ENCODE measurements at regions of chr15 and their contacts with region 1.

Region 1: DNA sequence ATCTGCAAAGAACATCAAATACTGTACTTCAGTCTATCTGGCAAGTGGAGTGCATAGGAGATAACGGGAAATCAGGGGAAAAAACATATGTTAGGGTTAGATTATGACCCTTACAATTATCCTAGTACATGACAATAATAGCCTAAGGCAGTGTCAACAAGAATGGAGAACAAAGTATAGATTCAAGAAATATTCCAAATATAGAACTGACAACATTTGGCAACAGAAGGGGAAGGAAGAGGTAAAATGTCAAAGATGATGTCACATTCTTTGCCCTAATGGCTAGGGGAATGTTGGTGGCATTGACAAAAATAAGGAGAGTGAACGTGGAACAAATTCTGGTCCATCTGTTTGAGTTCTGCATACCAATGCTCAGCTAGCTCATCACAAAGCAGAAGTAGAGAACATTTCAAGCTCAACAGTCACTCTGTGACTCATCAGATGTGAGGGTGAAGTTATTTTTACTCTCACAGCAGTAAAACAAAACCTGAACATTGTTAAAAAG is 15.5 kb upstream of the ATP8B4 start:
- DNase-seq: no peak
- ATAC-seq: peak; percentile 47
- H3K4me3 Mint-ChIP-seq: peak overlapping the region; percentile 24
- H3K27ac Mint-ChIP-seq: peak overlapping the region; percentile 96
- H3K4me1 Mint-ChIP-seq: peaks cover 53% of the 10 kb centered on the region
- H3K27me3 Mint-ChIP-seq: no peaks in the 10 kb centered on the region

Region 2: GRCh38 chr15:48946088-48946839 is 1188.3 kb before region 1 on chr15:
- CTCF ChIA-PET with region 1: no interaction called
- POLR2A ChIA-PET with region 1: no interaction called
- intact Hi-C with region 1: loop called (anchors 5 to 10 kb)
- DNase-seq: no peak
- ATAC-seq: peak; percentile 93
- H3K4me3 Mint-ChIP-seq: no peak overlapping the region
- H3K27ac Mint-ChIP-seq: peak overlapping the region; percentile 7
- H3K4me1 Mint-ChIP-seq: peaks cover 13% of the 10 kb centered on the region
- H3K27me3 Mint-ChIP-seq: peaks cover 20% of the 10 kb centered on the region

Region 3: DNA sequence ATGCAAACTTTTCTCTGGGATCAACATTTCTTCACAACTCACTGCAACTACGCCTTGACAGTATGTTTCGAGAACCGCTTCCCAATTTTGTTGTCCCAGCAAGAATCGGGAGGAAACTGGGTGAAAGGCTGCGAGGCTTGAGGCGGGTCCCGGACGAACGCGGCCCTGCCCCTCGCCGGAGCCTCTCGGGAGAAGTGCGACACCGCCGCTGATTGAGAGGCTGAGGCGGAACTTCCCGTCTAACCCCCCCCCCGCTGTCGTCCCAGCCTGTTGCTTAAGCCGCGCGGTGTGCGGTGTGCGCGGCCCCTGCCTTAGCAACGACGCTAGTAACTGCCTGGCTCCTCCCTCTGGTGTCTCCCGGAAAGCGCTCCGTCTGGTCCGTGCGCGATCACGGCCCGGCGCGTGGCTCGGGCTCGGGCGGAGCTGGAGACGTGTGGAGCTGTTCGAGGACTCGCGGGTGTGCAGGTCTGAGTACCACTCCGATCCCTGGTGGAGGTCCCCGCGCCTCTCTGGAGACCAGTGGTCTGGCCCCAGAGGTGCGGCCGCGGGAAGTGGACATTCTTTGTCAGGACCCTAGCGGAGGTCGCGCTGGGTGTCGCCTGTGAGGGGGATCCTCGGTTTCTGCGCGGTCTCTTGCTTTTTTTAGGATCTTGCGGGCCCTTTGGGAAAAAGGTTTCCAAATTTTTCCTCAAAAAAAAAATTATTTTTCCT is 513.8 kb before region 1 on chr15 and contains the starts of genes DTWD1 and FAM227B:
- CTCF ChIA-PET with region 1: no interaction called
- POLR2A ChIA-PET with region 1: no interaction called
- intact Hi-C with region 1: loop called (anchors 2 kb)
- DNase-seq: peak; percentile 96
- ATAC-seq: peak; percentile 98
- H3K4me3 Mint-ChIP-seq: peak within 1 kb of the TSS; percentile 86
- H3K27ac Mint-ChIP-seq: peak within 1 kb of the TSS; percentile 88
- H3K4me1 Mint-ChIP-seq: peaks cover 36% of the 10 kb centered on the region
- H3K27me3 Mint-ChIP-seq: no peaks in the 10 kb centered on the region
- total RNA-seq, gene DTWD1: 20.4 to 22.4 TPM
- total RNA-seq, gene FAM227B: 2.7 to 4.4 TPM

Region 4: GRCh38 chr15:50182219-50183013 is 47.8 kb after region 1 on chr15:
- CTCF ChIA-PET with region 1: no interaction called
- POLR2A ChIA-PET with region 1: interaction called, 4 read pairs
- intact Hi-C with region 1: loop called (anchors 2 to 5 kb)
- DNase-seq: peak; percentile 73
- ATAC-seq: peak; percentile 68
- H3K4me3 Mint-ChIP-seq: peak overlapping the region; percentile 85
- H3K27ac Mint-ChIP-seq: peak overlapping the region; percentile 88
- H3K4me1 Mint-ChIP-seq: peaks cover 21% of the 10 kb centered on the region
- H3K27me3 Mint-ChIP-seq: peaks cover 27% of the 10 kb centered on the region

Region 5: GRCh38 chr15:50377867-50378751 is 243.5 kb after region 1 on chr15:
- CTCF ChIA-PET with region 1: no interaction called
- POLR2A ChIA-PET with region 1: no interaction called
- intact Hi-C with region 1: loop called (anchors 1 kb)
- DNase-seq: no peak
- ATAC-seq: peak; percentile 96
- H3K4me3 Mint-ChIP-seq: no peak overlapping the region
- H3K27ac Mint-ChIP-seq: peak overlapping the region; percentile 77
- H3K4me1 Mint-ChIP-seq: peaks cover 19% of the 10 kb centered on the region
- H3K27me3 Mint-ChIP-seq: no peaks in the 10 kb centered on the region

Region 6: GRCh38 chr15:50908210-50909009 is 773.8 kb after region 1 on chr15 and contains the start of gene AP4E1:
- CTCF ChIA-PET with region 1: no interaction called
- POLR2A ChIA-PET with region 1: no interaction called
- intact Hi-C with region 1: loop called in 1 of 2 experiments (anchors 1 kb)
- DNase-seq: peak; percentile 96
- ATAC-seq: peak; percentile 62
- H3K4me3 Mint-ChIP-seq: peak within 1 kb of the TSS; percentile 87
- H3K27ac Mint-ChIP-seq: peak within 1 kb of the TSS; percentile 97
- H3K4me1 Mint-ChIP-seq: peaks cover 24% of the 10 kb centered on the region
- H3K27me3 Mint-ChIP-seq: no peaks in the 10 kb centered on the region
- total RNA-seq, gene AP4E1: 9.0 to 13.1 TPM

Measured in activated CD4-positive, alpha-beta T cell treated with anti-CD3 and anti-CD28 coated beads for 36 hours (primary cell).